Pancreas (tissue), 10 donors: ENCODE measurements at regions of chr14 and their contacts with region 1.

Region 1: GRCh38 chr14:101862177-101862576 is 100.7 kb downstream of the PPP2R5C start:
- DNase-seq: peak in 1 of 6 donors; percentile 10
- ATAC-seq: peak in 2 of 4 donors; percentile 14 to 16
- H3K4me3 ChIP-seq: no peak overlapping the region
- H3K27ac ChIP-seq: no peak overlapping the region
- H3K4me1 ChIP-seq: peaks cover 0 to 11% (median 7%) of the 10 kb centered on the region in 3 donors
- H3K27me3 ChIP-seq: no peaks in the 10 kb centered on the region
- CTCF ChIP-seq: no peak

Region 2: GRCh38 chr14:101364503-101365328 is 497.5 kb before region 1 on chr14:
- intact Hi-C with region 1: no loop called
- DNase-seq: peak in 1 of 6 donors; percentile 25
- ATAC-seq: peak in 3 of 4 donors; percentile 47 to 61 (median 55)
- H3K4me3 ChIP-seq: no peak overlapping the region
- H3K27ac ChIP-seq: no peak overlapping the region
- H3K4me1 ChIP-seq: no peaks in the 10 kb centered on the region
- H3K27me3 ChIP-seq: no peaks in the 10 kb centered on the region
- CTCF ChIP-seq: no peak

Region 3: DNA sequence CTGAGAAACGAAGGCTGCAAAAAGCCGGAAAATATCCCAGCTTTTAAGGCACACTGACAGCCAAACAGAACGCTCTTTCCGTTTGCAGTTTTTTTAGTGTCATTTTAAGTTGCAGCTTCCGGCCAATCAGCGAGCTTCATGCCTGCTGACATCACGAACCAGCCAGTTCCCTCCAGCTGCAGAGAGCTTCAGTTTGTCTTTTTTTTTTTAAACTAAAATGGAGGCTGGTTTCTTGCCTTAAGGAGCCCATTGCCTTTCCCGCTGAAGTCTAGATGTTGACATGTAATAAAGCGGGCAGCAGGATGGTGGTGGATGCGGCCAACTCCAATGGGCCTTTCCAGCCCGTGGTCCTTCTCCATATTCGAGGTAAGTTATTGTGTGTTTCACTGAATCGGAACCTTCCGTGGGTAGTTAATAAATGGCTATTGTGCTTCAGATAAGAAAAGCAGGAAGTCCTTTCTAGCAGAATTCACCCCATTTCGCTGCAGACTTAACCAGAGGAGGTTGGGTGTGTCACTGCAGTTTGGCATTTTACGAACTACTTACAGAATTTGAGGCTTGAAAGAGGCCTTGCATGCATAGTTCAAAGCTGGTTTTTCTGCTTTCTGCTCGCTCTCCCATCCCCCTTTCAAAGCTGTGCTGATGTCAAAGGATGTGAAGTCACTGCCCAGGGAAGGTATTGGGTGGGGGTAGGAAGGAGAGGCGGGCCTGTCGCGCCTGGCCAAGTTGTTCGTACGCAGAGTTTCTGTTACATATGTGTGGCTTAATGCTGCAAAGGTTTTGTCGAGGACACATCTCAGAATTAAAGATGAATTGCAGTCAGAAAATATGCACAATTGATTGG is 52.3 kb before region 1 on chr14:
- intact Hi-C with region 1: loop called in 1 of 3 experiments (anchors 10 kb)
- DNase-seq: peak; percentile 73 to 91 (median 87)
- ATAC-seq: peak; percentile 86 to 94 (median 90)
- H3K4me3 ChIP-seq: peak overlapping the region; percentile 12 to 42 (median 32)
- H3K27ac ChIP-seq: peak overlapping the region; percentile 77 to 98 (median 96)
- H3K4me1 ChIP-seq: peaks cover 8 to 53% (median 53%) of the 10 kb centered on the region in 3 donors
- H3K27me3 ChIP-seq: no peaks in the 10 kb centered on the region
- CTCF ChIP-seq: no peak

Region 4: GRCh38 chr14:101917413-101918017 is 55.3 kb after region 1 on chr14:
- intact Hi-C with region 1: no loop called
- DNase-seq: no peak
- ATAC-seq: peak in 2 of 4 donors; percentile 11 to 16
- H3K4me3 ChIP-seq: no peak overlapping the region
- H3K27ac ChIP-seq: no peak overlapping the region
- H3K4me1 ChIP-seq: no peaks in the 10 kb centered on the region
- H3K27me3 ChIP-seq: no peaks in the 10 kb centered on the region
- CTCF ChIP-seq: no peak